Prostate gland (tissue), 2 donors: ENCODE measurements at regions of chr19 and their contacts with region 1.

Region 1: DNA sequence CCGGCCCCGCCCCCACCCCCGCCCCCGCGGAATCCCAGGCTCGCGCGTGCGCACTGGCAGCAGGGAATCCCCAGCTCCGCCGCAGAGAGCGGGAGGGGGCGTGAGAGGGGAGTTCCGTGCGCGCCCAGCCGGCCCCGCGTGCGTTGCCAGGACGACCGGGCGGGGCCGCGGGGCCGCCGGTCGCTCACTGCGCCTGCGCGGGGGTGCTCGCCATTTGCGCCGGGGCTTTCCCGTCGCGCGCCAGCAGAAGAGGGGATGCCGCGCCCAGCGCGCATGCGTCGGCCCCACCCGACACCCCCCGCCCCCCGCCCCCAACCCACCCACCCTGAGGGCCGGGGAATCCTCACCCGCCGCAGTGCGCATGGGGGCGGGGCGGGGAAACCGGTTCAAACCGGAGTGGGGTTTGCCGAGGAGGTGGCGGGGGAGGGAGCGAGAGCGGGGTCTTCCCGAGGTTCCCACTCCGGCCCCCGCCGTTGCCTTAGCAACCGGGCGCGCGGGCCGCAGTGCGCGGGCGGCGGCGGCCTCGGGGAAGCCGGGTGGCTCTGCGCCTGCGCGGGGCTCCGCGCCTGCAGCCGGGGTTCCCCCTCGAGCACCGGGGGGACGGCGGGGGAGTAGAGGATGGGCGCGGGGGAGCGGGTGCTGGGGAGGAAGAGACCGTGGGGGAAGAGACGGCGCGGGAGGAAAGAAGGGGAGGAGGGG is 15.1 kb downstream of the CCDC124 start:
- DNase-seq: peak; percentile 87
- H3K4me3 ChIP-seq: peak overlapping the region; percentile 74
- H3K27ac ChIP-seq: peak overlapping the region; percentile 38 to 59
- H3K4me1 ChIP-seq: no peaks in the 10 kb centered on the region
- H3K27me3 ChIP-seq: peaks cover 15% of the 10 kb centered on the region
- CTCF ChIP-seq: no peak
- POLR2A ChIP-seq: no peak

Region 2: GRCh38 chr19:18058208-18059030 is 110.5 kb after region 1 on chr19:
- intact Hi-C with region 1: loop called (anchors 10 kb)
- DNase-seq: peak; percentile 70
- H3K4me3 ChIP-seq: no peak overlapping the region
- H3K27ac ChIP-seq: peak overlapping the region; percentile 68 to 74
- H3K4me1 ChIP-seq: no peaks in the 10 kb centered on the region
- H3K27me3 ChIP-seq: no peaks in the 10 kb centered on the region
- CTCF ChIP-seq: peak; percentile 97 to 98 (median 98)
- POLR2A ChIP-seq: no peak